ENCODE measurements at regions of chr6 and their contacts with region 1.

Region 1: GRCh38 chr6:32413427-32414047 is 6.6 kb upstream of the BTNL2 start:
- DNase-seq: peak; percentile 75
- H3K4me3 ChIP-seq: no peak overlapping the region
- H3K27ac ChIP-seq: no peak overlapping the region
- H3K4me1 ChIP-seq: no peaks in the 10 kb centered on the region
- H3K27me3 ChIP-seq: no peaks in the 10 kb centered on the region
- CTCF ChIP-seq: peak; percentile 78 to 92 (median 88)
- POLR2A ChIP-seq: no peak

Region 2: DNA sequence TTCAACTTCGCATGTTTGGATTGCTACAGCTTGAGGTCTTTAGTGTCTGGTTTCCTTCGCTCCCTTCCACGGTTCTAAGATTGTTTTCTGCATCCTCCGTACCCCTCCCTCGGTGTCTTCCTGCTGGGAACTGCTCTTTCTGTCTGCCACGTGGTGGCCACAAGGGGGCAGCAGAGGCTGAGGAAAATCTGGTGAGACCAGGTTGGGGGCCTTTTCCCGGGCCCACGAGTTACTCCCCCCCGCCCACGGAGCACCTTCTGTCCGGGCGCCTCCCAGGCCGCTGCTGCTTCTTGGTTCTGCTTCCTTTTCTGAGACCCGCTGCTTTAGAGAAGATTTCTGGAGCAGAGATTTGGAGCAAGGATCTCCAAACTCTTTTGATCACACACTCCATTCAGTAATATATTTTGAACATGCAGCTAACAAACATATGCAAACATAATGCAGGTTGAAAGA is 168.6 kb before region 1 on chr6:
- intact Hi-C with region 1: loop called (anchors 5 kb)
- DNase-seq: peak; percentile 71
- H3K4me3 ChIP-seq: no peak overlapping the region
- H3K27ac ChIP-seq: peak overlapping the region; percentile 53 to 66
- H3K4me1 ChIP-seq: no peaks in the 10 kb centered on the region
- H3K27me3 ChIP-seq: no peaks in the 10 kb centered on the region
- CTCF ChIP-seq: peak; percentile 91 to 94 (median 92)
- POLR2A ChIP-seq: no peak

Region 3: DNA sequence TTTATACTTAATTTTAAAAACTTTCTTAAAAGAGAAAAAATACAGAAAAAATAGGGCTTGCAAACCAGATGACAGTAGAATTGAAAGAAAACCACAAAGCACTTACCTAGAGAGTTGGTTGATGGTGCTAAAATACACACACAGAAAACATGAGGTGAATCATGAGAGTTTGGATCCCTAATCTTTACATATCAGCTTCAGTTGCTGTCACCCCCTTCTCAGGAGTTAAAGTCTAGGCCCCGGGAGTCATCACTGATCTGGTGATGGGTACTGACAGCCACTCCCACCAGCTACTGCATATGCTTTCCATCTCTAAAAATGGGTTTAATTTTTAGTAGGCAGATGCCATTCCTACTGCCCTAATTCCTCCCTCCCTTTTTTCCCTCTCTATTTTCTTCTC is 58.5 kb before region 1 on chr6:
- intact Hi-C with region 1: no loop called
- DNase-seq: no peak
- H3K4me3 ChIP-seq: no peak overlapping the region
- H3K27ac ChIP-seq: no peak overlapping the region
- H3K4me1 ChIP-seq: no peaks in the 10 kb centered on the region
- H3K27me3 ChIP-seq: no peaks in the 10 kb centered on the region
- CTCF ChIP-seq: no peak
- POLR2A ChIP-seq: no peak

Region 4: DNA sequence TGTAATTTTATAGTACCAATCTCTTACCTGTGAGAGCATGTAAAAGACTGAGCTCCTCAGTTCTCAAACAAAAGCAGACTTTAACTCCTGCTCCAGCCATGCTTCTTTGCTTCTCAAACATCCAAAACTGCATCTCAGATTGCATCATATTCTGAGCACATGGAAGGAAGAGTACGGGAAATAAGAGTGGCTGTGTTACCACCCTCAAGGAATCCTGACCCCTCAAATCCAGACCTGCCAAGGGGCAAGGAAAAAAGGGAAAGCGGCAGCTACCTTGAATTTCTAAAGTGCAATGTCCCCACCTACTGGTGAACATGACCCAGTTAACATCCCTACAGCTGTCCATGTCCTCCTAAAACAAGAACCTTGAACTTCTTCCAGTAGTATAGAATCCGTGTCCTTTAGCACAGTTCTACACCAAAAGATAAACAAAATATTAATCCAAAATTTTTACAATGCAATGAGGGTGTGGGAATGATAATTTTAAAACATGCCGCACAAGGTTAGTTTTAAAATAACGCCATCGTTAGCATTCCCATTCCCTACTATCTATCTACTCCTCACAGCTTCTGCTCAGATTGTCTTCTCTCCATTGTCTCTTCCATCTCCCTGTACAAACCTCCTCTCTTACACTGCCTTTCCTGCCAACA is 287.0 kb after region 1 on chr6:
- intact Hi-C with region 1: loop called (anchors 5 kb)
- DNase-seq: peak; percentile 28
- H3K4me3 ChIP-seq: no peak overlapping the region
- H3K27ac ChIP-seq: no peak overlapping the region
- H3K4me1 ChIP-seq: no peaks in the 10 kb centered on the region
- H3K27me3 ChIP-seq: no peaks in the 10 kb centered on the region
- CTCF ChIP-seq: peak in 3 of 4 experiments; percentile 56 to 58 (median 58)
- POLR2A ChIP-seq: no peak

Region 5: GRCh38 chr6:32738126-32738525 is 324.6 kb after region 1 on chr6:
- intact Hi-C with region 1: no loop called
- DNase-seq: no peak
- H3K4me3 ChIP-seq: no peak overlapping the region
- H3K27ac ChIP-seq: no peak overlapping the region
- H3K4me1 ChIP-seq: no peaks in the 10 kb centered on the region
- H3K27me3 ChIP-seq: no peaks in the 10 kb centered on the region
- CTCF ChIP-seq: no peak
- POLR2A ChIP-seq: no peak